Endothelial cell of umbilical vein (primary cell): ENCODE measurements at regions of chr10 and their contacts with region 1.

Region 1: DNA sequence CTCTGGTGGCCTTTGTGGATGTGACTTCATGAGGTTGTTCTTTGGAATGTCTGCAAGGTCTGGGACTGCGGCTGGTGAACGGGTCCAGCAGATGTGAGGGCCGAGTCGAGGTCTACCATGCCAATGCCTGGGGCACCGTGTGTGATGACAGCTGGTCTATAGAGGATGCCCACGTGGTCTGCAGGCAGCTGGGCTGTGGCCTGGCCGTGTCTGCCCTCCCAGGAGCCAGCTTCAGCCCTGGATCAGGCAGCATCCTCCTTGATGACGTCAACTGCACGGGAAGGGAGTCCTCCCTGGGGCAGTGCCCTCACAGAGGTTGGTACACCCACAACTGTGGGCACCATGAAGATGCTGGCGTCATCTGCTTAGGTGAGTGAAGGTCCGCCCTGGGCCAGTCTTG is 46.9 kb downstream of the CUZD1 start:
- DNase-seq: no peak
- H3K4me3 ChIP-seq: no peak overlapping the region
- H3K27ac ChIP-seq: no peak overlapping the region
- H3K4me1 ChIP-seq: no peaks in the 10 kb centered on the region
- H3K27me3 ChIP-seq: no peaks in the 10 kb centered on the region
- CTCF ChIP-seq: no peak
- POLR2A ChIP-seq: no peak

Region 2: DNA sequence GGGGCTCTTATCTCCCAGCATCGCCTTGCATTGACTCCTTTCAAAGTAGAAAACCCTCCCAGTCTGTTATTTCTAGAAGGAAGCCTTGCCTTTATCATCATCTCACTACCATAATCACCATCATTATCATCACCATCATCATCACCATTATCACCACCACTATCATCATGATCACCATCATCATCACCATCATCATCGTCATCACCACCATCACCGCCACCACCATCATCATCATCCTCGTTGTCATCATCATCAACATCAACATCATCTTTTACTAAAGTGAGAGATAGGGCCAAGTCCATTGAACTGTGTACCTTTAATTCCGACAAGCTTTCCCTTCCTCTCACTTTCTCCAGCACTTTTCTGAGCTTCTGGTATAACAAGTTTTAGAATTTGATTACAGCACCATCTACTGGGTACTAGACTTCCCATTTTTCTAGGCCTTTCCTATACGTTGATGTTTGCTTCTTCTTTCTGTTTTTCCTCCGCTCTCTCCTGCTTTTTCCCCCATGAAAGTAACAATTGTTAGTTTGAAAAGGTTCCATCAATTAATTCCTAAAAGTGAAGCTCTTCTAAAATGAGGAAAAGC is 581.8 kb after region 1 on chr10:
- CTCF ChIA-PET with region 1: no interaction called
- POLR2A ChIA-PET with region 1: no interaction called
- dilution Hi-C with region 1: no loop called
- intact Hi-C with region 1: loop called (anchors 5 kb)
- DNase-seq: no peak
- H3K4me3 ChIP-seq: no peak overlapping the region
- H3K27ac ChIP-seq: no peak overlapping the region
- H3K4me1 ChIP-seq: no peaks in the 10 kb centered on the region
- H3K27me3 ChIP-seq: no peaks in the 10 kb centered on the region
- CTCF ChIP-seq: no peak
- POLR2A ChIP-seq: no peak